ENCODE measurements at regions of chr7 and their contacts with region 1.

Region 1: GRCh38 chr7:87148332-87148955 is 3.8 kb upstream of the DMTF1 start:
- DNase-seq: peak; percentile 38
- H3K27ac ChIP-seq: no peak overlapping the region
- CTCF ChIP-seq: peak; percentile 91

Region 2: GRCh38 chr7:86667732-86668131 is 480.7 kb before region 1 on chr7:
- CTCF ChIA-PET with region 1: no interaction called
- POLR2A ChIA-PET with region 1: no interaction called
- DNase-seq: no peak
- H3K27ac ChIP-seq: no peak overlapping the region
- CTCF ChIP-seq: no peak

Region 3: GRCh38 chr7:86926732-86927131 is 221.7 kb before region 1 on chr7:
- CTCF ChIA-PET with region 1: interaction called, 15 read pairs
- POLR2A ChIA-PET with region 1: no interaction called
- DNase-seq: peak; percentile 67
- H3K27ac ChIP-seq: no peak overlapping the region
- CTCF ChIP-seq: peak; percentile 89

Region 4: GRCh38 chr7:86942081-86942480 is 206.4 kb before region 1 on chr7:
- CTCF ChIA-PET with region 1: interaction called, 12 read pairs
- POLR2A ChIA-PET with region 1: no interaction called
- DNase-seq: no peak
- H3K27ac ChIP-seq: no peak overlapping the region
- CTCF ChIP-seq: no peak

Measured in RWPE1 (cell line).